Activated CD8-positive, alpha-beta T cell treated with anti-CD3 and anti-CD28 coated beads, Interleukin-2, amount 10 ng/mL, durations not matched to agents 7 days and 5 days (primary cell): ENCODE measurements at regions of chr19 and their contacts with region 1.

Region 1: GRCh38 chr19:3557461-3558248 is at the start of gene MFSD12:
- DNase-seq: peak; percentile 96
- ATAC-seq: peak; percentile 93
- H3K4me3 Mint-ChIP-seq: peak within 1 kb of the TSS; percentile 94
- H3K27ac Mint-ChIP-seq: peak within 1 kb of the TSS; percentile 91
- H3K4me1 Mint-ChIP-seq: peaks cover 41% of the 10 kb centered on the region
- H3K27me3 Mint-ChIP-seq: no peaks in the 10 kb centered on the region
- total RNA-seq, gene MFSD12: 61.0 to 63.5 TPM

Region 2: DNA sequence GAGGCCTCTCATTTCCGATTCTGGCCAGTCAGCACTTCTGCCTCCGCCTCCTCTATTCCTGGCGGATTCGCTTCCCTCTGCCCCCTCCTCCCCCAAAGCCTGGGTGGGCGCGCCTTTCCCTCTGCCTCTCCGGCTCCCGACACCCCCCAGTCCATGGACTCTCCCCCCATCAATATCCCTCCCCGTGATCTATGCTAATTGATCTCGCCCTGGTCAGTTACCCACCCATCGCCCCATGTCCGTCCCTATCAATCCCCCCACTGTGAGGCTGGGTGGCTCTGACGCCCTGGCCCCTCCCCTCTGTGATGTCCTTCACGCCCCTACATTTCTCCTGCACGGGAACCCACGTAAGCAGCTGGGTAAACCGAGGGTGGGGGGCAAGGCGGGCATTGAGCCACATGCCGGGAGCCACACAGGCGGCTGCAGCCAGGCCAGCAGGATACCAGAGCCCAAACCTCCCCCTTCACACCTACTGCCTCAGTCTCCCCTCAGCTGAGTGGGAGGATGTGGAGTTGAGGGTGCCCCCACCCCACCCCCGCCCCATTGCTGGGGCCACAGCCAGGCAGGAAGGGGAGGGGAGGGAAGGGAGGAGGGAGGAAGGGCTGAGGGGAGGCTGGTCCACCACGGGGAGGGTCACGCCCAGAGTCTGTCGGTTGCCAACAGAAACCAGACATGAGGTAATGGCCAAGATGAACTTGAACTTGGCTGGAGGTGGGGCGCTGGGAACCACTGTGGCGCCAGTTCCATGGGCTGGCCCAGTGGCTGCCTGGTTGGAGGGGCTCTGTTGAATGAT is 98.4 kb before region 1 on chr19:
- CTCF ChIA-PET with region 1: no interaction called
- POLR2A ChIA-PET with region 1: no interaction called
- DNase-seq: peak; percentile 33
- ATAC-seq: peak; percentile 40
- H3K4me3 Mint-ChIP-seq: no peak overlapping the region
- H3K27ac Mint-ChIP-seq: no peak overlapping the region
- H3K4me1 Mint-ChIP-seq: peaks cover 17% of the 10 kb centered on the region
- H3K27me3 Mint-ChIP-seq: no peaks in the 10 kb centered on the region

Region 3: DNA sequence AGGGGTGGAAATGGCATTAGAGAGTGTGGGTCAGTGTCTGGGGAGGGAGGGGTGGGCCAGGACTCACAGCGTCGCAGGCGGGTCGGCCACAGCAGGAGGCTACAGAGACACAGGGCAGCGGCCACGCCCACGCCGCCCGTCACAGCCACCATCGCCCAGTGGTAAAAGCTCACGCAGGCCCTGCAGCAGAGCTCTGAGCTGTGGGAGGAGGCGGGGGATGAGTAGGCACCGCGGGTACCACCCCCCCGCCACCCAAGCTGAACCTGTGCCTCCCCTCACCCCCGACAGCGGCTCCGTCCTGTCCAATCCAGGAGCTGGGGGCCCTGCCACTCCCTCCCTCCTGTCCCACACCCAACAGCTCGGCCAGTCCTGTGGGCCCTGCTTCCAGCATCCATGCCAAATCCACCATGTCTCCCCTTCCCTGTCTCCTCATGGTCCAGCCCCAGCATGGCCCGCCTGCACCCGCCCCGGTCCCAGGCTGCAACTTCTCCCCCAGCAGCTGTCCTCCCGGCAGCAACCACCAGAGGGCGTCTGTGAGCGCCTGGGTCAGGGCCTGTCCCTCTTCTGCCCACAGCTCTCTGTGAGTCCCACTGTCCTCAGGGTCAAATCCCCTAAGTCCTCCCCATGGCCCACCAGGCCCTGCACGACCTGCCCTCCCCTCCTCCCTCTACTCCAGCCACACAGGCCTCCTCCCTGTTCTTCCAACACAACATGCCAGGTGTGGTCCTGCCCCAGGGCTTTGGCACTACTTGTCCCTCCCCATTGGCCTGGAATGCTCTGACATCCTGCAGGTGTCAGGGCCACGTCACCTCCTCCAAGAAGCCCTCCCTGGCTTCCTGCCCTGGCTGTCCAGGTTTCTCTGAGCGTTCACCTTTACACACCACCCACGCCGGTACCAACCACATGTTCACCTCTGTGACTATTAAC is 12.7 kb before region 1 on chr19:
- CTCF ChIA-PET with region 1: interaction called, 32 read pairs
- POLR2A ChIA-PET with region 1: interaction called, 6 read pairs
- DNase-seq: peak; percentile 82
- ATAC-seq: peak; percentile 69
- H3K4me3 Mint-ChIP-seq: no peak overlapping the region
- H3K27ac Mint-ChIP-seq: peak overlapping the region; percentile 61
- H3K4me1 Mint-ChIP-seq: peaks cover 5% of the 10 kb centered on the region
- H3K27me3 Mint-ChIP-seq: no peaks in the 10 kb centered on the region